Gastrocnemius medialis (tissue), 4 donors: ENCODE measurements at regions of chr1 and their contacts with region 1.

Region 1: DNA sequence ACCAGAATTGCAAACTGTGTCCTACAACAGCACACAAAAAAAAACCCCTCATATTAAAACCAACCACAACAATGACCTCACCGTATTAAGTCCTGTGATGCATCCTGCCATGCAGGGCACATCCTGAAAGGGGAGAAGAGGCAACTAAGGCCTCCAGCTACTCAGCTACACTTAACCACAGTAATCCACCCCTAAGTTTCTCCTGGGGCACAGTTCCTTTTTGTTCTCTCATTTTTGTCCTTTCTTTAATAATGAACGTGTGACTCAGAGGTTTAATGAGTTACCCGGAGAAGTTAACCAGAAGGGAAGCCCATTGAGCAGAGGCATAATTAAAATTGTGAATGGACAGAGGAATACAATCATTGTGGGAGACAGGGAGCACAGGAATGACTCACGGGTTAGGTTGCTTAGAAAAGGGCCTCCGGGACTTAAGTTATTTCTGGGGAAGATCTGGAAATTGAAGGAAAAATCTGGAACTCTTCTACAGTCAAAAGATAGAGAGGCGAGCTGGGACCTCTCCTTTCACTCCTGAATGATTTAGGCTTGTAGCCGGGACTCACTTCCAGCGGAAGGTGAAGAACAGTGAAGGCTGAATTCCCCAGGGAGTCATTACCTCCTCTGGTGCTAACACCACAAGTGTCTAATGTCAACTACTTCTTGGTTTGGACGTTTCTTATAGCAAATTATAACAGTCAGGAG is 36.9 kb upstream of the HIVEP3 start:
- DNase-seq: no peak
- ATAC-seq: no peak
- H3K4me3 ChIP-seq: no peak overlapping the region
- H3K27ac ChIP-seq: peak overlapping the region in 1 of 4 donors; percentile 21
- H3K4me1 ChIP-seq: peaks cover 23 to 24% of the 10 kb centered on the region in 2 donors
- H3K27me3 ChIP-seq: no peaks in the 10 kb centered on the region
- CTCF ChIP-seq: no peak
- POLR2A ChIP-seq: no peak

Region 2: DNA sequence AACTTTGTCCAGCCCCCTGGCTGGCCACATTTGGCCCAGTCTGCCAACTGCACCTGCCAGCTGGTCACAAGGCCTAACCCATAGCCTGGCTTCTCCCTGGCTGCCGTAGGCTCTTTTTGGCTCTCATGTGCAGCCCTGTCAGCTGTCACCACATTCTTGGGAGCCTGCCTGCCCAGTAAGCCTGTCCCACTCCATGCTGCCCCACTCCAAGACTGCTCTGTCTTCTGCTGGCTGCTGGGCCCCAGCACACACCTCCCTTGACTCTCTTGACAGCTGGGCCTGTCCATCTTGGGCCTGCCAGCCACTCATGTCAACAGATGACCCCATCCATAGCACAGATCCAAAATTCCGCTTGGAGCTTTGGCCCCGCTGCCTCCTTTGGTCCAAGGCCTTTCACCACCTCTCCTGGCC is 396.8 kb before region 1 on chr1:
- in situ Hi-C with region 1: no loop called
- intact Hi-C with region 1: loop called (anchors 5 kb)
- DNase-seq: peak; percentile 89 to 98
- ATAC-seq: peak; percentile 94 to 96
- H3K4me3 ChIP-seq: no peak overlapping the region
- H3K27ac ChIP-seq: peak overlapping the region; percentile 76 to 83 (median 78)
- H3K4me1 ChIP-seq: peaks cover 17 to 21% of the 10 kb centered on the region in 2 donors
- H3K27me3 ChIP-seq: no peaks in the 10 kb centered on the region
- CTCF ChIP-seq: no peak
- POLR2A ChIP-seq: no peak

Region 3: GRCh38 chr1:41812051-41812450 is 143.6 kb before region 1 on chr1:
- in situ Hi-C with region 1: no loop called
- intact Hi-C with region 1: loop called (anchors 2 kb)
- DNase-seq: peak in 1 of 2 donors; percentile 60
- ATAC-seq: peak in 1 of 2 donors; percentile 36
- H3K4me3 ChIP-seq: no peak overlapping the region
- H3K27ac ChIP-seq: peak overlapping the region; percentile 50 to 79 (median 75)
- H3K4me1 ChIP-seq: peaks cover 40 to 44% of the 10 kb centered on the region in 2 donors
- H3K27me3 ChIP-seq: no peaks in the 10 kb centered on the region
- CTCF ChIP-seq: peak; percentile 42 to 68 (median 57)
- POLR2A ChIP-seq: no peak

Region 4: GRCh38 chr1:41891199-41891896 is 64.3 kb before region 1 on chr1:
- in situ Hi-C with region 1: no loop called
- intact Hi-C with region 1: loop called (anchors 5 kb)
- DNase-seq: peak in 1 of 2 donors; percentile 55
- ATAC-seq: peak; percentile 69 to 77
- H3K4me3 ChIP-seq: peak overlapping the region; percentile 40 to 56 (median 52)
- H3K27ac ChIP-seq: peak overlapping the region; percentile 83 to 91 (median 88)
- H3K4me1 ChIP-seq: peaks cover 53 to 65% of the 10 kb centered on the region in 2 donors
- H3K27me3 ChIP-seq: no peaks in the 10 kb centered on the region
- CTCF ChIP-seq: peak in 1 of 5 experiments; percentile 17
- POLR2A ChIP-seq: peak in 1 of 2 donors; percentile 5

Region 5: GRCh38 chr1:41919764-41920397 is 35.7 kb before region 1 on chr1:
- in situ Hi-C with region 1: no loop called
- intact Hi-C with region 1: loop called (anchors 2 kb)
- DNase-seq: peak; percentile 63 to 86
- ATAC-seq: peak; percentile 74 to 79
- H3K4me3 ChIP-seq: peak overlapping the region; percentile 53 to 70 (median 55)
- H3K27ac ChIP-seq: peak overlapping the region; percentile 81 to 84 (median 83)
- H3K4me1 ChIP-seq: peaks cover 37% of the 10 kb centered on the region in 2 donors
- H3K27me3 ChIP-seq: no peaks in the 10 kb centered on the region
- CTCF ChIP-seq: no peak
- POLR2A ChIP-seq: peak; percentile 69 to 80